H1 (cell line): ENCODE measurements at regions of chr7 and their contacts with region 1.

Region 1: GRCh38 chr7:134750083-134751062 is 29.1 kb upstream of the CALD1 start:
- DNase-seq: peak; percentile 50 to 89
- H3K4me3 ChIP-seq: no peak overlapping the region
- H3K27ac ChIP-seq: no peak overlapping the region
- H3K4me1 ChIP-seq: no peaks in the 10 kb centered on the region; a peak in 2 of 7 replicates
- H3K27me3 ChIP-seq: no peaks in the 10 kb centered on the region
- CTCF ChIP-seq: peak; percentile 83 to 97 (median 85)
- EP300 ChIP-seq: no peak
- POLR2A ChIP-seq: no peak
- RAD21 ChIP-seq: peak; percentile 73 to 84

Region 2: GRCh38 chr7:134701272-134701671 is 49.1 kb before region 1 on chr7:
- CTCF ChIA-PET with region 1: interaction called, 11 read pairs
- POLR2A ChIA-PET with region 1: no interaction called
- DNase-seq: no peak
- H3K4me3 ChIP-seq: no peak overlapping the region
- H3K27ac ChIP-seq: no peak overlapping the region
- H3K4me1 ChIP-seq: peaks cover 0 to 7% (median 4%) of the 10 kb centered on the region in 4 experiments; a peak in 3 of 7 replicates
- H3K27me3 ChIP-seq: no peaks in the 10 kb centered on the region
- CTCF ChIP-seq: peak in 2 of 3 experiments; percentile 61 to 66; a peak in 3 of 4 replicates
- EP300 ChIP-seq: no peak
- POLR2A ChIP-seq: no peak
- RAD21 ChIP-seq: peak; percentile 62 to 71

Region 3: GRCh38 chr7:134766779-134767519 is 16.6 kb after region 1 on chr7:
- CTCF ChIA-PET with region 1: interaction called, 15 read pairs
- POLR2A ChIA-PET with region 1: interaction called, 3 read pairs
- DNase-seq: no peak
- H3K4me3 ChIP-seq: no peak overlapping the region
- H3K27ac ChIP-seq: no peak overlapping the region
- H3K4me1 ChIP-seq: peaks cover 0 to 2% (median 0%) of the 10 kb centered on the region in 4 experiments; a peak in 1 of 7 replicates
- H3K27me3 ChIP-seq: no peaks in the 10 kb centered on the region; a peak in 1 of 7 replicates
- CTCF ChIP-seq: no peak
- EP300 ChIP-seq: no peak
- POLR2A ChIP-seq: no peak
- RAD21 ChIP-seq: no peak

Region 4: DNA sequence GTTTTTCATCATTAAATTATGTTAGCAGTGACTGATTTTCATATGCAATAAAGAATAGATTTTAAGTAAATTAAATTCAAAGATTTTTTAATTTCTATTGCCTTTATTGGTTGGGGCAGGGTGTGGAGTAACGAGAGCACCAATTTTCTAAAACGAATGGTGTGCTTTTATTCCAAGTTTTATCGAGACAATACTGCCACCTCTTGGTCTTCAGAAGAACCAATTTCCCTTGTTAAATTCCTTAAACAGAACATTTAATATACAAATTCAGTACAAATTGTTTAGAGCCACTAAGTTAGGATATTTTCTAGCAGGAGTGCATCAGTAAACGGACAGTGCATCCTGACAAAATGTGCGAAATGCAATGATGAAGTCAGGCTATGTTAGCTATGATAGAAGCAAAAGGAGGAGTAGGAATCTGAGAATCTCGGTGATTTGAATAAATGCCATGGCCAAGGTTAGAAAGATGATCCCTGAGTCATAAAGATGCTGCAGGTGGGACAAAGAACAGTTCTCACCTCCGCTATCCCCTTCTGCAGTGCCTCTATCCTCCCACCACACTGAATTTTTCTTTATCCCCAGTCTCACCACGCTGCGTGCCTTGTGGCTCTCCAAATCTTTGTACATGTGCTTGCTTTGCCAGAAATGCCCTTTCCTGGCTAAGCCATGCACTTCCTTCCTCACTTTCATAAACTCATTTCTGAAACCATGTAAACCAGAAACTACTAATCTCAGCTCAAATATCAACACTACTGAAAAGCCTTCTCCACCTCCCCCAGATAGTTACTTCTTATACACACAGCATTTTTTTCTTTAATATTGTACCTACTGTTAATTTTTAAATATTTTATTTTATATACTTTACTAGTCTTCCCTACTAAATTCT is 204.1 kb after region 1 on chr7:
- CTCF ChIA-PET with region 1: interaction called, 11 read pairs
- POLR2A ChIA-PET with region 1: no interaction called
- DNase-seq: no peak
- H3K4me3 ChIP-seq: no peak overlapping the region
- H3K27ac ChIP-seq: no peak overlapping the region
- H3K4me1 ChIP-seq: no peaks in the 10 kb centered on the region
- H3K27me3 ChIP-seq: peaks cover 0 to 1% (median 0%) of the 10 kb centered on the region in 4 experiments; a peak in 1 of 7 replicates
- CTCF ChIP-seq: peak in 2 of 3 experiments; percentile 33 to 49; a peak in 2 of 4 replicates
- EP300 ChIP-seq: no peak
- POLR2A ChIP-seq: no peak
- RAD21 ChIP-seq: peak; percentile 69 to 74